Breast epithelium (tissue), 4 donors: ENCODE measurements at regions of chr12 and their contacts with region 1.

Region 1: GRCh38 chr12:121754849-121755248 is 38.6 kb downstream of the RHOF start:
- DNase-seq: no peak
- H3K4me3 ChIP-seq: no peak overlapping the region
- H3K27ac ChIP-seq: peak overlapping the region in 1 of 2 donors; percentile 68
- H3K4me1 ChIP-seq: no peaks in the 10 kb centered on the region
- H3K27me3 ChIP-seq: no peaks in the 10 kb centered on the region
- CTCF ChIP-seq: no peak
- POLR2A ChIP-seq: no peak

Region 2: DNA sequence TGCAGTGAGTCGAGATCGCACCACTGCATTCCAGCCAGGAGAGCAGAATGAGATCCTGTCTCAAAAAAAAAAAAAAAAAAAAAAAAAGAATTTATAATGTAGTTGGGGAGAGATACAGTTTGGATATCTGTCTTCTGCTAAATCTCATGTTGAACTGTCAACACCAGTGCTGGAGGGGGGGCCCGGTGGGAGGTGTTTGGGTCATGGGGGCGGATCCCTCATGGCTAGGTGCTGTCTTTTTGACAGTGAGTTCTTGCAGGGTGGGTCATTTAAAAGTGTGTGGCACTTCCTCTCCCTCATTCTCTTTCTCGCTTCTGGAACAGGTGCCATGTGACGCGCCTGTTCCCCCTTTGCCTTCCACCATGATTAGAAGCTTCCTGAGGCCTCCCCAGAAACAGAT is 634.8 kb after region 1 on chr12:
- intact Hi-C with region 1: loop called (anchors 5 kb)
- DNase-seq: no peak
- H3K4me3 ChIP-seq: no peak overlapping the region
- H3K27ac ChIP-seq: no peak overlapping the region
- H3K4me1 ChIP-seq: no peaks in the 10 kb centered on the region
- H3K27me3 ChIP-seq: no peaks in the 10 kb centered on the region
- CTCF ChIP-seq: no peak
- POLR2A ChIP-seq: no peak